Mammary epithelial cell (primary cell): ENCODE measurements at regions of chr12 and their contacts with region 1.

Region 1: GRCh38 chr12:121697098-121697698 is 15.4 kb upstream of the TMEM120B start:
- DNase-seq: no peak
- H3K4me3 ChIP-seq: no peak overlapping the region
- H3K27ac ChIP-seq: no peak overlapping the region
- H3K4me1 ChIP-seq: no peaks in the 10 kb centered on the region
- H3K27me3 ChIP-seq: no peaks in the 10 kb centered on the region
- CTCF ChIP-seq: peak; percentile 37 to 40

Region 2: DNA sequence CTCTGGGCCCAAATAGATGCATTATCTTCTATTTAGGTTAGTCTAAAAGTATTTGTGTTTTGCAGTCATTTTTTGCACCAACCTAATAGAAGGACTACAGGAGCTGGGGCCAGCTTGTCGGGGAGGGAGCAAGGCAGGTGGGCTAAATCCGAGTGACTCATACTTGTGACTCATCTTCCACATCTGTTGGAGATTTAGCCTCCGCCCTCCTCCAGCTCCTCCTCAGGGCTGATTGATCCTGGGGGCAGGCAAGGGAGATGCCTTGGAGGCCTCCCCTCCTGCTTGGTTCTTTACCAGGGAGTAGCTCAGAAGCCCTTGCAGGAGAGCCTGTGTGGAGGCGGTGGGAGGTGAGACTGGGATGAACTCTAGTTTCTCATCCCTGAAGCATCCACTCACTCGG is 68.4 kb after region 1 on chr12:
- CTCF ChIA-PET with region 1: no interaction called
- dilution Hi-C with region 1: no loop called
- in situ Hi-C with region 1: loop called (anchors 5 kb)
- intact Hi-C with region 1: no loop called
- DNase-seq: peak; percentile 58
- H3K4me3 ChIP-seq: no peak overlapping the region
- H3K27ac ChIP-seq: no peak overlapping the region
- H3K4me1 ChIP-seq: peaks cover 10% of the 10 kb centered on the region
- H3K27me3 ChIP-seq: no peaks in the 10 kb centered on the region
- CTCF ChIP-seq: no peak

Region 3: DNA sequence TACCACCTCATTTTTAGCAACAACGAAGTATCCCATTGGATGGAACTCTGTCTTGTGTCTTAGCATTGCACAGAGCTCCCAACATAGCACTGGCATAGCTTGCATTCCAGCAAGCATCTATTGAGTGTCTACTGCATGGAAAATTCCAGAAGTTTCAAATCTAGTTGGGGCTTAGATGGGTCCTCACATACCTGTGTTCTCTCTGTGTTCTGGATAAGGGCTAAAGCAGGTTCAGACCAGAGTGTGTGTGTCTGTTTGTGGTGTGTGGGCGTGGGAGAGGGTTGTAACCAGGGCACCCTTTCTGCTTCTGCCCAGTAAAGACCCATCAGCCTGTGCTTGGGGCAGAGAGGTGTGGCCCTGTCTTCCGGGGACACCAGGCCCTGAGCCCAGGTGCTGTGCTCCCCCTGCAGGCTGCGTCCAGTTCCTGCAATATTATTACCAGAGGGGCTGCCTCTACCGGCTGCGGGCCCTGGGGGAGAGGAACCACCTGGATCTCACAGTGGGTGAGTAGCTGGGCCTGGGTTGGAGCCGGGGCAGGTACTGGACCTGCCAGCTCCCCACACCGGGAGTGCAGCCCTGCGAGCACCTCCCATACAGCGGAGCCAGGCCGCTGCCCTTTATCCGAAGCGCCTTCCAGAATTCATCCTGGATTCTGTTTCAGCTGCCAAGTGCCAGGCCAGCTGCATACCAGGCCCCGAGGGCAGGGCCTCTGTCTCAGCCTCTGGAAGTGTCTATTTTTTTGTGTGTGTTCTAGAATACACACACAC is 76.0 kb after region 1 on chr12:
- CTCF ChIA-PET with region 1: no interaction called
- dilution Hi-C with region 1: no loop called
- in situ Hi-C with region 1: loop called (anchors 5 kb)
- intact Hi-C with region 1: loop called (anchors 1 kb)
- DNase-seq: peak; percentile 64
- H3K4me3 ChIP-seq: no peak overlapping the region
- H3K27ac ChIP-seq: no peak overlapping the region
- H3K4me1 ChIP-seq: peaks cover 10% of the 10 kb centered on the region
- H3K27me3 ChIP-seq: no peaks in the 10 kb centered on the region
- CTCF ChIP-seq: peak; percentile 77 to 95